IMR-90 (cell line): ENCODE measurements at regions of chr1 and their contacts with region 1.

Region 1: GRCh38 chr1:1013105-1013921 is at the start of gene ISG15:
- DNase-seq: peak; percentile 83
- ATAC-seq: peak; percentile 95
- H3K4me3 ChIP-seq: peak within 1 kb of the TSS; percentile 54
- H3K27ac ChIP-seq: peak within 1 kb of the TSS; percentile 82
- H3K4me1 ChIP-seq: peaks cover 4% of the 10 kb centered on the region
- H3K27me3 ChIP-seq: no peaks in the 10 kb centered on the region
- CTCF ChIP-seq: no peak
- POLR2A ChIP-seq: peak; percentile 85
- RAD21 ChIP-seq: no peak
- total RNA-seq, gene ISG15: 92.2 and 105 TPM in 2 replicates

Region 2: DNA sequence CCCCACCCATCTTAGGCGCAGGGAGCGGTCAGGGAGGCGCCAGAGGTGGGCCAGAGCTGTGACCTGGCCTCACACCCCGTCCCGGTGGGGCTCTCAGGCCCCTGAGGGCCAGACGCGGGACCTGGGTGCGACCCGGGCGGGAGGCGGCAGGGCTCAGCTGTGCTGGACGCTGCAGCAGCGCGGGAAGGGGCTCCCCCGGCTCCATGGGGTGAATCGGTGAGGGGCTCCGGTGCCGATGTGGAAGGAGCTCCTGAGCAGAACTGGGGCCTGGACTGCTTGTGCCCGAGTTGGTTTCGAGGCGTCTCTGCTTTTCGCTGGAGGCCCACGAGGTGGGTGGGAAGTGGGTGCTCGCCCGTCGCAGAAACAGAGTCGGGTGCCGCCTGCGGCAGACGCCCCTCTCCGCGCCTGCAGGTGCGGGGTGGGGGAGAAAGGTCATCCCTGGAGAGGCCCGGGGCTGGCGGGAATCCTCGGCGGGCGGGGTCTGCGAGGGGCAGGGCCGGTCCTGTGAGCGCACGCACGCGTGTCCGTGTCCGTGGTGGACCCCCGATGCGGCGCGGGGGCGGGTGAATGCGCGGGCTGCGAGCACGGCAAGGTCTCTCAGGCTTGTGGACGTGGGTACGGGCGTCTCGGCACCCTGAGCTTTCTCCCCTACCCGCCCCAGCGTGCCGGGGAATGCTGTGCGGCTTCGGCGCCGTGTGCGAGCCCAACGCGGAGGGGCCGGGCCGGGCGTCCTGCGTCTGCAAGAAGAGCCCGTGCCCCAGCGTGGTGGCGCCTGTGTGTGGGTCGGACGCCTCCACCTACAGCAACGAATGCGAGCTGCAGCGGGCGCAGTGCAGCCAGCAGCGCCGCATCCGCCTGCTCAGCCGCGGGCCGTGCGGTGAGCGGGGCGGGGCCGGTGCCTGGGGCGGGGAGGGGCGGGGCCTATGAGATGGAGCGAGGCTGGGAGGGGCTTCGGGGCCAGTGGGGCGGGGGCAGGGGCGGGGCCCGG is 27.0 kb after region 1 on chr1:
- CTCF ChIA-PET with region 1: no interaction called
- POLR2A ChIA-PET with region 1: no interaction called
- dilution Hi-C with region 1: no loop called
- in situ Hi-C with region 1: no loop called
- intact Hi-C with region 1: loop called (anchors 2 kb)
- DNase-seq: peak; percentile 85
- ATAC-seq: peak; percentile 98
- H3K4me3 ChIP-seq: peak overlapping the region; percentile 27
- H3K27ac ChIP-seq: no peak overlapping the region; the same call in 1 of the 2 replicates
- H3K4me1 ChIP-seq: peaks cover 7% of the 10 kb centered on the region
- H3K27me3 ChIP-seq: no peaks in the 10 kb centered on the region
- CTCF ChIP-seq: peak; percentile 40
- POLR2A ChIP-seq: no peak
- RAD21 ChIP-seq: peak; percentile 42

Region 3: GRCh38 chr1:1059494-1060280 is 46.4 kb after region 1 on chr1:
- CTCF ChIA-PET with region 1: no interaction called
- POLR2A ChIA-PET with region 1: no interaction called
- dilution Hi-C with region 1: no loop called
- in situ Hi-C with region 1: no loop called
- intact Hi-C with region 1: no loop called
- DNase-seq: peak; percentile 53
- ATAC-seq: peak; percentile 91
- H3K4me3 ChIP-seq: peak overlapping the region; percentile 83
- H3K27ac ChIP-seq: no peak overlapping the region; the same call in 1 of the 2 replicates
- H3K4me1 ChIP-seq: peaks cover 13% of the 10 kb centered on the region
- H3K27me3 ChIP-seq: peaks cover 4% of the 10 kb centered on the region; the same call in 1 of the 2 replicates
- CTCF ChIP-seq: no peak
- POLR2A ChIP-seq: peak; percentile 48; the same call in 1 of the 2 replicates
- RAD21 ChIP-seq: no peak

Region 4: GRCh38 chr1:1122981-1123480 is 109.7 kb after region 1 on chr1:
- CTCF ChIA-PET with region 1: no interaction called
- POLR2A ChIA-PET with region 1: no interaction called
- dilution Hi-C with region 1: no loop called
- in situ Hi-C with region 1: no loop called
- intact Hi-C with region 1: no loop called
- DNase-seq: no peak
- ATAC-seq: no peak
- H3K4me3 ChIP-seq: no peak overlapping the region
- H3K27ac ChIP-seq: no peak overlapping the region
- H3K4me1 ChIP-seq: no peaks in the 10 kb centered on the region
- H3K27me3 ChIP-seq: no peaks in the 10 kb centered on the region; the same call in 1 of the 2 replicates
- CTCF ChIP-seq: no peak
- POLR2A ChIP-seq: no peak
- RAD21 ChIP-seq: no peak